Posterior cingulate gyrus (tissue), 11 donors: ENCODE measurements at regions of chr1 and their contacts with region 1.

Region 1: GRCh38 chr1:34742667-34743270 is 12.1 kb upstream of the GJB5 start:
- DNase-seq: peak; percentile 69 to 98 (median 86)

Region 2: GRCh38 chr1:33633019-33633801 is 1109.6 kb before region 1 on chr1:
- intact Hi-C with region 1: loop called (anchors 2 kb)
- DNase-seq: peak; percentile 83 to 99 (median 96)

Region 3: GRCh38 chr1:34460193-34460592 is 282.6 kb before region 1 on chr1:
- intact Hi-C with region 1: loop called (anchors 10 kb)
- DNase-seq: peak in 3 of 10 donors; percentile 8 to 35 (median 26)

Region 4: DNA sequence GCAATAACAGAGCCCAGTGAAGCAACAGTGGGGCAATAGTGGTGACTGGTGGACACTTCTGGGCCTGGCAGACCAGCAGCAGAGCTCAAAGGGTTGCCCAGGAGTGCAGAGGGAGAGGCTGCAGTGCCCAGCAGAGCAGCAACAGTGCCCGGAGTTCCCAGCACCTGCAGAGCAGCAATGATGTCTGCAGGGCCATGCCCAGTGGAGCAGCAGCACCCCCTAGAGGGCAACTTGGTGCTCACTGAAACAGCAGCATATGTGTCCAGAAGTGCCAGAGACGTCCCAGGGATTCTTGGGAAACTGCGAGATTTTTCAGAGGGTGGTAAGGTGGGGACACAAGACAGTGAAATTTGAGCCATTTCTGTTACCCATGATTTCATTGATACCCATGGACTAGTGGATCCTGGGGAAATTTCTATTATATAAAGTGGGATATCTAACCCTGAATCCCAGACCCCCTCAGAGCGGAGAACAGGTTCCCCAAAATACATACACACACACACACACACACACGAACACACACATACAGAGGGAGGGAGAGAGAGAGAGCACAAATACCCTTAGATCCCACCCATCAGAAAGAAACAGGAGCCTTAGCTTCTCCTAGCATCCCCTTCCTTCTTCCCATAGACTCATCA is 144.8 kb before region 1 on chr1:
- intact Hi-C with region 1: loop called (anchors 5 kb)
- DNase-seq: peak; percentile 78 to 98 (median 90)